ENCODE measurements at regions of chr5 and their contacts with region 1.

Region 1: GRCh38 chr5:38979535-38979934 is 94.7 kb downstream of the RICTOR start:
- DNase-seq: no peak
- ATAC-seq: no peak
- H3K4me3 Mint-ChIP-seq: no peak overlapping the region
- H3K27ac Mint-ChIP-seq: no peak overlapping the region
- H3K4me1 Mint-ChIP-seq: no peaks in the 10 kb centered on the region
- H3K27me3 Mint-ChIP-seq: no peaks in the 10 kb centered on the region
- CTCF ChIP-seq: no peak

Region 2: DNA sequence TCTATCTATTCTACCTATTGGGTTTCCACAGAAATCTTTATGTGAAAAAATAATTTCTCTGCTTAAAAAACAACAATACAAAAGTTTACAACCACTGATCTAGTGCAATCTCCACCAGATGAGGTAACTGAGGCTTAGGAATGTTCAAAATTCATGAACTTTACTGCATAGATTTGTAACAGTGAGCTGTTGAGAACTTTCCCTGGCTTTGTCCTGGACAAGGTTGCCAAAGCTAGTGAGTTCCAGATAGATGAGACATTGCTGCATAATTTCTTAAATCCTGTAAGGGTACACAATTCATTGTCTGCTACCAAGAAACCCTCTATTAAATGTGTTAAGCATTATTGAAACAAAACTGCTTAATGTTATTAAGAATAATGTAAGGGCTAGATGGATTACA is 31.0 kb before region 1 on chr5:
- CTCF ChIA-PET with region 1: no interaction called
- POLR2A ChIA-PET with region 1: no interaction called
- intact Hi-C with region 1: loop called (anchors 5 kb)
- DNase-seq: no peak
- ATAC-seq: no peak
- H3K4me3 Mint-ChIP-seq: no peak overlapping the region
- H3K27ac Mint-ChIP-seq: no peak overlapping the region
- H3K4me1 Mint-ChIP-seq: no peaks in the 10 kb centered on the region
- H3K27me3 Mint-ChIP-seq: no peaks in the 10 kb centered on the region
- CTCF ChIP-seq: no peak